CD8-positive, alpha-beta T cell (primary cell): ENCODE measurements at regions of chr2 and their contacts with region 1.

Region 1: GRCh38 chr2:174645286-174645685 is 47.7 kb upstream of the WIPF1 start:
- DNase-seq: no peak
- ATAC-seq: no peak
- H3K4me3 ChIP-seq: no peak overlapping the region
- H3K4me3 Mint-ChIP-seq: no peak overlapping the region
- H3K27ac ChIP-seq: no peak overlapping the region
- H3K27ac Mint-ChIP-seq: no peak overlapping the region
- H3K4me1 ChIP-seq: no peaks in the 10 kb centered on the region
- H3K4me1 Mint-ChIP-seq: peaks cover 9% of the 10 kb centered on the region
- H3K27me3 ChIP-seq: no peaks in the 10 kb centered on the region
- H3K27me3 Mint-ChIP-seq: no peaks in the 10 kb centered on the region
- CTCF ChIP-seq: no peak

Region 2: DNA sequence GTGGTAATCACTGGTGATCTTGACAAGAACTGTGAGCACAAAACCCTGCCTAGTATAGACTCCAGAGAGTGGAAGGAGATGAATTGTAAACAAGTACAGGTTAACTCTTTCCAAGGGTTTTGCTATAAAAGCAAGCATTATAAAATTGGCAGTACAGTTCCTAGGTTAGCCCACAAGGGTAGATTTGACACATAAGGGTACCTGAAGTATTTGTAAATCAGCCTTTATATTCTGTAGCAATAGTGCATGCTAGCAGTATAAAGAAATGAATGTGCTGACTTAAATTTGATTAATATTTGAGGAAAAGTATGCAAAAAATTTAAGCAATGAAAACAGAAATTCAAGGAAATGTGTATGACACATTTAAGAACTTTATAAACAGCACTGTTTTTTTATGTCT is 722.5 kb before region 1 on chr2:
- CTCF ChIA-PET with region 1: no interaction called
- POLR2A ChIA-PET with region 1: no interaction called
- intact Hi-C with region 1: no loop called
- DNase-seq: no peak
- ATAC-seq: no peak
- H3K4me3 ChIP-seq: no peak overlapping the region
- H3K4me3 Mint-ChIP-seq: no peak overlapping the region
- H3K27ac ChIP-seq: no peak overlapping the region
- H3K27ac Mint-ChIP-seq: peak overlapping the region; percentile 84
- H3K4me1 ChIP-seq: peaks cover 38% of the 10 kb centered on the region
- H3K4me1 Mint-ChIP-seq: peaks cover 74% of the 10 kb centered on the region
- H3K27me3 ChIP-seq: no peaks in the 10 kb centered on the region
- H3K27me3 Mint-ChIP-seq: no peaks in the 10 kb centered on the region
- CTCF ChIP-seq: no peak

Region 3: DNA sequence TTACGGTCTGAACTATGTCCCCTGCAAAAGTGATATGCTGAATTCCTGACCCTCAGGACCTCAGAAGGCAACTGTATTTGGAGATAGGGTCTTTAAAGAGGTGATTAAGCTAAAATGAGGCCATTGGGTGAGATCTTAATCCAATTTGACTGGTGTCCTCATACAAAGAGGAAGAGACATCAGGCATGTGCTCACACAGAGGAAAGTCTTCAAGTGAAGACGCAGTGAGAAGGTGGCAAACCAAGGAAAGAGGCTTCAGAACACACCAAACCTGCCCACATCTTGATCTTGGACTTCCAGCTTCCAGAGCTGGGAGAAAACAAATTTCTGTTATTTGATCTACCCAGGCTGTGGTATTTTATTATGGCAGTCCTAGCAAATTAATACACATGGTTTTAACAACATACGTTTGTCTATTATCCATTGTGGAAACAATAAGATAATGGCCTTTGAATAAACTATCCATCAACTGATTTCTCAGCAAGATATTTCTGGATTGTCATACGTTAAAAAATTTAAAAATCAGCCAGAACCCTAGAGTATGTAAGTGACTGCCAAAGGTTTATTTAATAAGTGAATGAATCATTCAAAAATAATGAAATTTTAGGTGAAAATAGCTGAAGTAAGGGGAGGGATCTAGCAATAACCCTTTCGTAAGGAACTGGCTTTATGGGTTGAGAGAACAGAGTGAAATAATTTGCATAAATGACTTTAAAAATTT is 54.2 kb before region 1 on chr2:
- CTCF ChIA-PET with region 1: no interaction called
- POLR2A ChIA-PET with region 1: no interaction called
- intact Hi-C with region 1: no loop called
- DNase-seq: peak in 2 of 9 experiments; percentile 36 to 56
- ATAC-seq: no peak
- H3K4me3 ChIP-seq: peak overlapping the region; percentile 24 to 30
- H3K4me3 Mint-ChIP-seq: peak overlapping the region; percentile 74
- H3K27ac ChIP-seq: peak overlapping the region; percentile 46 to 91
- H3K27ac Mint-ChIP-seq: peak overlapping the region; percentile 98
- H3K4me1 ChIP-seq: peaks cover 62% of the 10 kb centered on the region
- H3K4me1 Mint-ChIP-seq: peaks cover 77% of the 10 kb centered on the region
- H3K27me3 ChIP-seq: no peaks in the 10 kb centered on the region
- H3K27me3 Mint-ChIP-seq: no peaks in the 10 kb centered on the region
- CTCF ChIP-seq: no peak

Region 4: GRCh38 chr2:174624895-174625430 is 20.3 kb before region 1 on chr2:
- CTCF ChIA-PET with region 1: no interaction called
- POLR2A ChIA-PET with region 1: interaction called, 3 read pairs
- intact Hi-C with region 1: loop called in 1 of 2 experiments (anchors 1 kb)
- DNase-seq: no peak
- ATAC-seq: no peak
- H3K4me3 ChIP-seq: no peak overlapping the region
- H3K4me3 Mint-ChIP-seq: no peak overlapping the region
- H3K27ac ChIP-seq: no peak overlapping the region
- H3K27ac Mint-ChIP-seq: peak overlapping the region; percentile 79
- H3K4me1 ChIP-seq: peaks cover 54% of the 10 kb centered on the region
- H3K4me1 Mint-ChIP-seq: peaks cover 72% of the 10 kb centered on the region
- H3K27me3 ChIP-seq: no peaks in the 10 kb centered on the region
- H3K27me3 Mint-ChIP-seq: no peaks in the 10 kb centered on the region
- CTCF ChIP-seq: no peak